ENCODE measurements at regions of chr1 and their contacts with region 1.

Region 1: GRCh38 chr1:246753670-246754535 is 29.7 kb downstream of the SCCPDH start:
- DNase-seq: peak; percentile 76
- ATAC-seq: peak; percentile 88
- H3K4me3 Mint-ChIP-seq: no peak overlapping the region
- H3K27ac Mint-ChIP-seq: no peak overlapping the region
- H3K4me1 Mint-ChIP-seq: no peaks in the 10 kb centered on the region
- H3K27me3 Mint-ChIP-seq: no peaks in the 10 kb centered on the region

Region 2: GRCh38 chr1:246689409-246690008 is 64.4 kb before region 1 on chr1:
- CTCF ChIA-PET with region 1: interaction called, 22 read pairs
- POLR2A ChIA-PET with region 1: no interaction called
- DNase-seq: peak; percentile 66
- ATAC-seq: peak; percentile 98
- H3K4me3 Mint-ChIP-seq: no peak overlapping the region
- H3K27ac Mint-ChIP-seq: no peak overlapping the region
- H3K4me1 Mint-ChIP-seq: no peaks in the 10 kb centered on the region
- H3K27me3 Mint-ChIP-seq: no peaks in the 10 kb centered on the region

Region 3: GRCh38 chr1:246742396-246742795 is 11.5 kb before region 1 on chr1:
- CTCF ChIA-PET with region 1: no interaction called
- POLR2A ChIA-PET with region 1: no interaction called
- DNase-seq: no peak
- ATAC-seq: no peak
- H3K4me3 Mint-ChIP-seq: no peak overlapping the region
- H3K27ac Mint-ChIP-seq: no peak overlapping the region
- H3K4me1 Mint-ChIP-seq: no peaks in the 10 kb centered on the region
- H3K27me3 Mint-ChIP-seq: no peaks in the 10 kb centered on the region

Region 4: GRCh38 chr1:246765521-246765920 is 11.6 kb after region 1 on chr1:
- CTCF ChIA-PET with region 1: interaction called, 10 read pairs
- POLR2A ChIA-PET with region 1: no interaction called
- DNase-seq: no peak
- ATAC-seq: no peak
- H3K4me3 Mint-ChIP-seq: no peak overlapping the region
- H3K27ac Mint-ChIP-seq: no peak overlapping the region
- H3K4me1 Mint-ChIP-seq: no peaks in the 10 kb centered on the region
- H3K27me3 Mint-ChIP-seq: no peaks in the 10 kb centered on the region

Region 5: DNA sequence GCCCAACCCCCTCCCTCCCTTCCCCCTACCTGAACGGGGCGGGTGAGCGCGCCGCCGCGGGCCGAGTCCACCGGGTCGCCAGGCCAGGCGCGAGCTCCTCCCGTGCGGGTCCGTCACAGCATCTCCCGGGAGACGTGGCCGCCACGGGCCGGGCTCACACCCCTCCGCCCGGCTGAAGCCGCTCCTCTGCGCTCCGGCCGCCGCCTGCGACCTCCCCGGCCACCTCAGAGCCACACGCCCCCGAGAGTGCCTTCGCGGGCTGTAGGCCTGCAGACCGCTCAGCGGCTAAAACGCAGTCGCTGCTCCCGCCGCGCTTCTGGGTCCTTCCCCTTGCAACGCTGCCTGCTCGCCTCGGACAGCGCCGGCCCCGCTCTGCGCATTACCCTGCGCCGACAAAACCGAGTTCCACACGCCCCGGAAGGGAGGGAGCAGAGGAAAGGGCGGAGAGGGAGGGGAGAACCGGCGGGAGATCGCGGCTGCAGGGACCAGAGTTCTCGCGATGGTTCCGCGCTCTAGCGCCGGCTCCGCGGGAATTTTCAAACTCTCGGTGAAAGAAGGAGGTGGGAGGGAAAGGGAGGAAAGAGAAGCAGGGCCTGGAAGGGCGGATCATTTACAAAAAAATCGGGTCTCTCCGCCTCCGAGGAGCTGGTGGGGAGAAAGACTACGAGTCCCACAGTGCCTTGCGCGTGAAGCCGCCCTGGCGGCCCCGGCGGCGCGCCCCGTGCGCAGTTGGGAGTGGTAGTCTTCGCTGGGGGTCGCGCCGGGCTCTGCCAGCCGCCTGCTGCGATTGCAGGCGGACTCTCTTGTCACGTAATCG is 177.9 kb after region 1 on chr1 and contains the start of gene AHCTF1:
- CTCF ChIA-PET with region 1: no interaction called
- POLR2A ChIA-PET with region 1: no interaction called
- DNase-seq: peak; percentile 95
- ATAC-seq: peak; percentile 95
- H3K4me3 Mint-ChIP-seq: peak within 1 kb of the TSS; percentile 92
- H3K27ac Mint-ChIP-seq: peak within 1 kb of the TSS; percentile 97
- H3K4me1 Mint-ChIP-seq: peaks cover 31% of the 10 kb centered on the region
- H3K27me3 Mint-ChIP-seq: peaks cover 3% of the 10 kb centered on the region
- total RNA-seq, gene AHCTF1: 30.4 to 33.4 TPM

Region 6: GRCh38 chr1:247218121-247218651 is 464.3 kb after region 1 on chr1:
- CTCF ChIA-PET with region 1: no interaction called
- POLR2A ChIA-PET with region 1: no interaction called
- DNase-seq: no peak
- ATAC-seq: no peak
- H3K4me3 Mint-ChIP-seq: no peak overlapping the region
- H3K27ac Mint-ChIP-seq: no peak overlapping the region
- H3K4me1 Mint-ChIP-seq: peaks cover 3% of the 10 kb centered on the region
- H3K27me3 Mint-ChIP-seq: no peaks in the 10 kb centered on the region

Measured in activated CD8-positive, alpha-beta T cell treated with anti-CD3 and anti-CD28 coated beads, Interleukin-2, amount 10 ng/mL, durations not matched to agents 7 days and 5 days (primary cell).